ENCODE measurements at regions of chr2 and their contacts with region 1.

Region 1: GRCh38 chr2:27356382-27357181 is at the start of gene GTF3C2:
- H3K4me3 Mint-ChIP-seq: peak within 1 kb of the TSS; percentile 97
- H3K27ac Mint-ChIP-seq: peak within 1 kb of the TSS; percentile 96
- H3K4me1 Mint-ChIP-seq: peaks cover 43% of the 10 kb centered on the region
- H3K27me3 Mint-ChIP-seq: no peaks in the 10 kb centered on the region

Region 2: GRCh38 chr2:26745609-26746327 is 610.8 kb before region 1 on chr2:
- intact Hi-C with region 1: no loop called
- H3K4me3 Mint-ChIP-seq: no peak overlapping the region
- H3K27ac Mint-ChIP-seq: no peak overlapping the region
- H3K4me1 Mint-ChIP-seq: peaks cover 10% of the 10 kb centered on the region
- H3K27me3 Mint-ChIP-seq: peaks cover 12% of the 10 kb centered on the region

Region 3: DNA sequence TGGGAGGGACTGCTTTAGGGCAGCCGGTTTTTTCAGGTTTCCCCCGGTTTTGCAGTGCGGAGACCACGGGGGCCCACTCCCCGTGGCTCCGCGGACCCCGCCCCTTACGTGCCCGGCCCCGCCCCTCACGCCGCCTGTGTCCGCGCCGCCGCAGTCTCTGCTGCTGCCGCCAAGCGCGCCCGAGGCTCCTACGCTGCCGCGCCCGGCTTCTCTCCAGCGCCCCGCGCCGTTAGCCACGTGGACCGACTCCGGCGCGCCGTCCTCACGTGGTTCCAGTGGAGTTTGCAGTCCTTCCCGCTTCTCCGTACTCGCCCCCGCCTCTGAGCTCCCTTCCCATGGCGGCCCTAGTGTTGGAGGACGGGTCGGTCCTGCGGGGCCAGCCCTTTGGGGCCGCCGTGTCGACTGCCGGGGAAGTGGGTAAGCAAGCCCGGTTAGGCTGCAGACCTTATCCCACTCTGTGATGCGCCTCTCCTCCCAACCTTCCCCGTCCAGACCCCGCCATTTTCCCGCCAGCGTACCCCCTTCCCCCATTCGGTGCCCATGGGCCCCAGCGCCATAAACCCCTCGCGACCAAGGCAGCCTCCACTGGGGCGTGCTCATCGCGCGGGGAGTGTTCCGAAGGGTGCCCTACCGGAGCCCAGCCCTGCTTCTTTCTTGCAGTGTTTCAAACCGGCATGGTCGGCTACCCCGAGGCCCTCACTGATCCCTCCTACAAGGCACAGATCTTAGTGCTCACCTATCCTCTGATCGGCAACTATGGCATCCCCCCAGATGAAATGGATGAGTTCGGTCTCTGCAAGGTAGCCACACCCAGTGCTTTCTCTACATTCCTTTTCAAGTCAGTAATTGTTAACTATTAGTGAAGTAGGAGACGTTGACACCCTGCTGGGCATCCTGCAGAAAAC is 139.1 kb before region 1 on chr2 and contains the start of gene CAD:
- intact Hi-C with region 1: loop called (anchors 10 kb)
- H3K4me3 Mint-ChIP-seq: peak within 1 kb of the TSS; percentile 99
- H3K27ac Mint-ChIP-seq: peak within 1 kb of the TSS; percentile 96
- H3K4me1 Mint-ChIP-seq: peaks cover 39% of the 10 kb centered on the region
- H3K27me3 Mint-ChIP-seq: no peaks in the 10 kb centered on the region

Region 4: DNA sequence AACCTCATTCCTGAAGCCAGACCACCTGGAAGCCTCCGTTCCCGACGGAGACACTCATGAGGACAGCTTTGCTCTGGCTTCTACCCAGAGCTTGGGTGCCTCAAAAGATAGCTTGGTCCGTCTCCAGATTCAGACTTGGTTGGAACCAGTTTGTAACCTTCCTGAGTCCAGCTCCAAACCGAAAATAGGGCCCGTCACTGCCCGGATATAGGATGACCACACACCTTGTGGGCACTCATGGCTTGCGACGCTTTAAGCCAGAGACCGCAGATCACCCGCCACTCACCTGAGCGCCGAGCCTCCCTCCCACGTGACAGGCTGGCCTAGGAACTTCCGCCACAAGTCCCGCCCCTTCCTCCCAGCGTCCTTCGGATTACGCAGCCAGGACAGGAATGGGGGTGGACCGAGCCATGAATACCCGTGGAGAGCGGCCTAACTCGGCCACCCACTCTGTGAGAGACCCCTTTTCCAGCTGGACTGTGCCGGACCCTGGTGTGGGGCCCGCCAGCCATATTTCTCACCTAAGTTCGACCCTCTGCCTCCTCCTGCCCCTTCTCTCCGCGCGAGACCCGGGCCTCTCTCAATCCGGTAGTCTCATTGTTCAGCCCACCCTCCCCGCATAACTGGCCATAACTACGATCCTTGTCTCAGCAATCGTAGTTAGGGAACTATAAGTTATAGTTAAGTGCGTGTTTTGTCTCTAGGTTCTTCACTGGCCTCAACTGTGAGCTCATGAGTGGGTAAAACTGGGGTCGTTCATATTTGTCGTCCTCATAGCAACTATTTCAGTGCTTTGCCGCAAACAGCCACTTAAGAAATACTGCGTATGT is 33.6 kb before region 1 on chr2 and contains the start of gene MPV17:
- intact Hi-C with region 1: loop called (anchors 1 kb)
- H3K4me3 Mint-ChIP-seq: peak within 1 kb of the TSS; percentile 94
- H3K27ac Mint-ChIP-seq: peak within 1 kb of the TSS; percentile 100
- H3K4me1 Mint-ChIP-seq: peaks cover 37% of the 10 kb centered on the region
- H3K27me3 Mint-ChIP-seq: no peaks in the 10 kb centered on the region

Region 5: GRCh38 chr2:27370026-27370815 is 13.6 kb after region 1 on chr2 and contains the starts of genes EIF2B4 and SNX17:
- intact Hi-C with region 1: loop called (anchors 1 kb)
- H3K4me3 Mint-ChIP-seq: peak within 1 kb of the TSS; percentile 98
- H3K27ac Mint-ChIP-seq: peak within 1 kb of the TSS; percentile 95
- H3K4me1 Mint-ChIP-seq: peaks cover 58% of the 10 kb centered on the region
- H3K27me3 Mint-ChIP-seq: no peaks in the 10 kb centered on the region

Region 6: GRCh38 chr2:27428213-27428977 is 71.8 kb after region 1 on chr2 and contains the start of gene NRBP1:
- intact Hi-C with region 1: loop called (anchors 5 kb)
- H3K4me3 Mint-ChIP-seq: peak within 1 kb of the TSS; percentile 96
- H3K27ac Mint-ChIP-seq: peak within 1 kb of the TSS; percentile 99
- H3K4me1 Mint-ChIP-seq: peaks cover 38% of the 10 kb centered on the region
- H3K27me3 Mint-ChIP-seq: no peaks in the 10 kb centered on the region

Region 7: GRCh38 chr2:27798948-27799645 is 442.5 kb after region 1 on chr2:
- intact Hi-C with region 1: no loop called
- H3K4me3 Mint-ChIP-seq: no peak overlapping the region
- H3K27ac Mint-ChIP-seq: no peak overlapping the region
- H3K4me1 Mint-ChIP-seq: peaks cover 66% of the 10 kb centered on the region
- H3K27me3 Mint-ChIP-seq: no peaks in the 10 kb centered on the region